ENCODE measurements at regions of chr3 and their contacts with region 1.

Region 1: DNA sequence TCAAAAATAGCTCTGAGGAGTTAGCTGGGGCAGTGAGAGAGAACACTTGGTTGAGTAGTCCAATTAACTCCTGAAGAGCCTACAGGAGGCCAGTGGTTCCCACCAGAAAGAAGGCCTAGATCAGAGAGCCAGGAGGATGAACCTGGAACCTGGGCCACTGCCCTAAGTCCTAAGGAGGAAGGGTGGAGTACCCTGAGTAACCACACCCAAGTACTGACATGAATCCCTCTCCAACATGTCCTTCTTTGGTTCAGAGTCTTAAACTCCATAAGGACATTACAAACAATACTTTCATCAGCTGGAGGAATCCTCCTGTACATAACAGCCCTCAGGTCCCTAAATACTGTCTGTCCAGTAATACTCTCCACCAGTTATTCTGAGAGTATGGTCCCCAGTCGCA is 25.6 kb upstream of the C3orf62 start:
- DNase-seq: no peak
- H3K27ac ChIP-seq: peak overlapping the region; percentile 29; the same call in 1 of the 2 replicates
- CTCF ChIP-seq: no peak

Region 2: DNA sequence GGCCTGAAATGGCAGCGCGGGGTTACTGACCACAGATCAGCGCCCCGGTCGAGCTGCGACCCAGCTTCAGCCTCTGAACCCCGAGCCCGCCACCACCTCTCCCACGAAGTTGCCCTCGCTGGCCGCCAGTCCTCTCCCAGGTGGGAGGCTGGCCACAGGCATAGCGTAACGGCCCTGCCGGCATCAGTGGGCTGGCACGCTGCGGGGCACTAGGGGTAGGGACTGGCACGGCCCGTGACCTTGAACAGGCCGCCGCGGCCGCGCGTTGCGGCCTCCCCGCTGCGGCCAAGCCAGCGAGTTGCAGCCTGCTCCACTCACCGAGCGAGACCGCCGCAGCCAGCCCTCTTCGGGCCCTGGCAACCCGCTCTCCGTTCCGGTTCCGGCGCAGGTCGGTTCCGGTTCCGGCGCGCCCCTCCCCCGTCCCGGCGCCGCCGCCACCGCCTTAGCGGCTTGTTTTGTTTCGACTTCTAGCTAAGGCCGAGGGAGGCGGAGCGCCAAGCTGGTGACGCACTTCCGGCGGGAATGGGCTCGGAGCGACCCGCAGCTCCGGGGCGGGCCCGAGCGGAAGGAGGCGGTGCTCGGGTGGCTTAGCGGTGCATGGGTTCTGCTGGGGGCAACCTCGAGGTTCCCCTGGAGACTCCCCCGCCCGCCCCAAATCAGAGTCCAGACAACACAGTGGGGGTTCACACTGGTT is 182.0 kb before region 1 on chr3 and contains the start of gene USP19:
- CTCF ChIA-PET with region 1: no interaction called
- POLR2A ChIA-PET with region 1: no interaction called
- DNase-seq: peak; percentile 90
- H3K27ac ChIP-seq: peak within 1 kb of the TSS; percentile 95
- CTCF ChIP-seq: no peak

Region 3: GRCh38 chr3:49316696-49317457 is 14.3 kb after region 1 on chr3:
- CTCF ChIA-PET with region 1: interaction called, 12 read pairs
- POLR2A ChIA-PET with region 1: no interaction called
- DNase-seq: no peak
- H3K27ac ChIP-seq: peak overlapping the region; percentile 13; the same call in 1 of the 2 replicates
- CTCF ChIP-seq: no peak

Measured in RWPE1 (cell line).